ENCODE measurements at regions of chr16 and their contacts with region 1.

Region 1: DNA sequence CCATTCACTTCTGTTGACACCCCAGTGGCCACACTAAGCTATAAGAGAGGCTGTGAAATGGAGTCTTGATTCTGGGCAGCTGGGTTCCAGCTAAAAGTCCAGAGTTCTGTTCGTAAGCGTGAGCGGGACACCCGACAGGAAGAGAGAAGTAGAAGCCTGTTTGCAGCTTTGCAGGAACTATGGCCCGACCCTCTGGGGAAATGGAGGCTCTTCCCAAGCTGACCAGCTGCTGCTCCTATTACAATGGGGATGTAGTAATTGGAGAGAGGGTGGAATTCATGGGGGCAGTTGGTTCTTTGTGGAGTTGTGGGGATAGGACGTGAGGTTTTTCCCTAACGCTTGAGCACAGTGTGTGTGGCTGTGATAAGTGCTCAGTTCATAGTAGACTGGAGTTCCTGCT is 28.4 kb downstream of the UBALD1 start:
- DNase-seq: no peak
- ATAC-seq: no peak
- H3K4me3 Mint-ChIP-seq: no peak overlapping the region
- H3K27ac Mint-ChIP-seq: no peak overlapping the region
- H3K4me1 Mint-ChIP-seq: peaks cover 9% of the 10 kb centered on the region
- H3K27me3 Mint-ChIP-seq: peaks cover 7% of the 10 kb centered on the region
- CTCF ChIP-seq: no peak

Region 2: DNA sequence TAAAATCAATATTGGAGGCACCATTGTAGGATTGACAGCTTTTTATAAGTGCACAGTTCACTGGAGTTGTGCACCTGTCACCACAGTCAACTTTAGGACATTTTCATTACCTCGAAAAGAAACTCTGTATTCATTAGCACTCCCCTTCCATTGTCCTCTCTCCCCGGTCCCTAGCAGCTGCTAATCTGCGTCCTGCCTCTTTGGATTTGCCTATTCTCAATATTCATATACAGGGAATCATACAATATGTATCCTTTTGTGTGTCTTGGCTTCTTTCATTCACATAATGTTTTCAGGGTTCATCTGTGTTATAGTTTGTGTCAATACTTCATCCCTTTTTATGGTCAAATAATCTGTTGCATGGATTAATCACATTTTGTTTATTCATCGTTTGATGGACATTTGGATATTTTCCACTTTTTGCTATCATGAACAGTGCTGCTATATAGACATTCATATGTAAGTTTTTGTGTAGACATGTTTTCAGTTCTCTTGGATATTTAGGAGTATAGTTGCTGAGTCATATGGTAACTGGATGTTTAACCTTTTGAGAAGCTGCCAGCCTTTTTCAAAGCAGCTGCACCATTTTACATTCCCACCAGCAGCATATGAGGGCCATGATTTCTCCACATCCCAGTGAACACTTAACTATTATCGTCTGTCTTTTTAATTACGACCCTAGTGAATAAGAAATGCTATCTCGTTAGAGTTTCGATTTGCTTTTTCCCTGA is 150.8 kb before region 1 on chr16:
- CTCF ChIA-PET with region 1: no interaction called
- POLR2A ChIA-PET with region 1: no interaction called
- DNase-seq: no peak
- ATAC-seq: no peak
- H3K4me3 Mint-ChIP-seq: no peak overlapping the region
- H3K27ac Mint-ChIP-seq: no peak overlapping the region
- H3K4me1 Mint-ChIP-seq: no peaks in the 10 kb centered on the region
- H3K27me3 Mint-ChIP-seq: no peaks in the 10 kb centered on the region
- CTCF ChIP-seq: no peak

Region 3: DNA sequence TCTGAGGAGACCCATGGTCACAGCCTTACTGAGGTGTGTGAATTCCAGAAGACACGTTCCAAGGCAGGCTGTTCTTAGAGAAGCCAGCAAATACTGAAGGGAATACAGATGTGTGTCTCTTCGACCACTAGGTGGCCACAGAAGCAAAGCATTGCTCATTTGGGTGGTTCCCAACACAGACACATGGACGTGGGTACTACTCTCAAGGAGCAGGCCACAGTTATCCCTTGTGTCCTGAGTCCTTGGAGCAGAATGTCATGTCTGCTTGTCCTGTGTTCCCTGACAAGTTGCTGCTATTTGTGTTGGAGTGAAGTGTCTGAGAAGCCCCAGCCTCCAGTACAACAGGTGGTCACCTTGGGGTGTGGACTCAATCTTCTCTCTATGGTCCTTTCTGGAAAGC is 79.8 kb before region 1 on chr16:
- CTCF ChIA-PET with region 1: interaction called, 19 read pairs
- POLR2A ChIA-PET with region 1: no interaction called
- DNase-seq: peak; percentile 51
- ATAC-seq: peak; percentile 88
- H3K4me3 Mint-ChIP-seq: no peak overlapping the region
- H3K27ac Mint-ChIP-seq: peak overlapping the region; percentile 13
- H3K4me1 Mint-ChIP-seq: peaks cover 6% of the 10 kb centered on the region; the same call in 1 of the 2 replicates
- H3K27me3 Mint-ChIP-seq: no peaks in the 10 kb centered on the region; the same call in 1 of the 2 replicates
- CTCF ChIP-seq: peak; percentile 88

Region 4: GRCh38 chr16:4538350-4539235 is 47.7 kb before region 1 on chr16 and contains the start of gene CDIP1:
- CTCF ChIA-PET with region 1: interaction called, 20 read pairs
- POLR2A ChIA-PET with region 1: no interaction called
- DNase-seq: peak; percentile 95
- ATAC-seq: peak; percentile 90
- H3K4me3 Mint-ChIP-seq: peak within 1 kb of the TSS; percentile 80
- H3K27ac Mint-ChIP-seq: 0 out of 2 replicates have a peak within 1 kb of the TSS, but pooled peaks have one; percentile 65
- H3K4me1 Mint-ChIP-seq: peaks cover 30% of the 10 kb centered on the region
- H3K27me3 Mint-ChIP-seq: peaks cover 32% of the 10 kb centered on the region
- CTCF ChIP-seq: no peak
- total RNA-seq, gene CDIP1: 68.9 to 79.2 TPM (median 78.9 TPM) in 3 replicates

Region 5: DNA sequence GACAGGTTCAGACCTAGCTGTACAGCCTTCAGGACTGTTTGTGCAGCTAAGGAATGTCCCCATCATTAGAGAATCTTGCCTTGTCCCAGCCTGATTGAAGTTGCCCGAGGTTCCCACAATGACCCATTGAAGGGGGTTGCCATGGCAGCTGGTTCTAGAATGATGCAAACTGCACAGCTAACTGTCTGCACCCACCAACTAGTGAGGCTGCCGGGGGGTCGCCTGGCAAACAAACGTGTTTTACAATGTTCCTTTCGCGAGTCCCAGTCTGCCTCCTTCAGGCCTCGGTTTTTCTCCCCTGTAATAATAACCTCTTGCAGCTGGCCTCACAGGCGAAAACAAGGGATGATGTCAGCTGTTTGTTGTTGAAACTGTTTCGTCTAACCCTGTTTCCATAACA is 24.7 kb before region 1 on chr16:
- CTCF ChIA-PET with region 1: interaction called, 12 read pairs
- POLR2A ChIA-PET with region 1: no interaction called
- DNase-seq: no peak
- ATAC-seq: no peak
- H3K4me3 Mint-ChIP-seq: no peak overlapping the region
- H3K27ac Mint-ChIP-seq: no peak overlapping the region
- H3K4me1 Mint-ChIP-seq: no peaks in the 10 kb centered on the region
- H3K27me3 Mint-ChIP-seq: peaks cover 5% of the 10 kb centered on the region; the same call in 1 of the 2 replicates
- CTCF ChIP-seq: no peak

Region 6: DNA sequence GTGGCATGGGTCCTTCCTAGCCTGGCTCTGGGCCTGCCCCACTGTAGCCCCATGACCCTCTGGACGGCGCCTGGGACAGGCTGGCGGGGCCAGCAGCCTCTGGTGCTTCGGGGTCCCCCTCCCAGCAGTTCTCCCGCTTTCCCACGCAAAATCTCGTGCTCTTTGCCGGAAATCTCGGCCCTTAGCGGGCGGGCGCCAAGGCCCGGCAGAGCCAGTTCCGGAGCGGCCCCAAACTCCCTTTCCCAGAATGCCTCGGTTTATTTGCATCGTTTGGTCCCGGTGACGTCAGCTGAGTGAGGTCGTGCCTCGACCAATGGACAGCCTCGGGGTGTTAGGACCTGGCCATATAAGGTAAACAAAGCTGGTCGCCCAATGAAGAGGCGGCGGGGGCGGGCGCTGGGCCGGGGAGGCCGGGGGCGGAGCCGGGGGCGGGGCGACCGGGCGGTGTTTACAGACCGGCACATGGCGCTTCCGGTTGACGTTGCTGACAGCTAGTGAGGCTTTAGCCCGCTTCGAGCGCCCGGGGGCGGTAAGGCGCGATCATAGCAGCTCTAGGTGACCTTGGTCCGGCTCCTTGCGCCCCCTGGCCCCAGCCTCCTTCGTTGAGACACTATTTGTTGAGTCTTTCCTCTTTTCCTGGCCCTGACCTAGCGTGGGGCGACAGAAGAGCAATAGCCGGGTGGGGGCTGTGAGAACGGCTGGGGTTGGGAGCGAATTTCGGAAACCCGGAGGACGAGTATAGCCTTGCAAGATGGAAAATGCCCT is 29.9 kb after region 1 on chr16:
- CTCF ChIA-PET with region 1: interaction called, 20 read pairs
- POLR2A ChIA-PET with region 1: no interaction called
- DNase-seq: peak; percentile 99
- ATAC-seq: peak; percentile 81
- H3K4me3 Mint-ChIP-seq: peak overlapping the region; percentile 87
- H3K27ac Mint-ChIP-seq: peak overlapping the region; percentile 100
- H3K4me1 Mint-ChIP-seq: peaks cover 38% of the 10 kb centered on the region
- H3K27me3 Mint-ChIP-seq: no peaks in the 10 kb centered on the region
- CTCF ChIP-seq: no peak

Measured in WTC11 (cell line).